Adrenal gland (tissue), 19 donors: ENCODE measurements at regions of chr12 and their contacts with region 1.

Region 1: DNA sequence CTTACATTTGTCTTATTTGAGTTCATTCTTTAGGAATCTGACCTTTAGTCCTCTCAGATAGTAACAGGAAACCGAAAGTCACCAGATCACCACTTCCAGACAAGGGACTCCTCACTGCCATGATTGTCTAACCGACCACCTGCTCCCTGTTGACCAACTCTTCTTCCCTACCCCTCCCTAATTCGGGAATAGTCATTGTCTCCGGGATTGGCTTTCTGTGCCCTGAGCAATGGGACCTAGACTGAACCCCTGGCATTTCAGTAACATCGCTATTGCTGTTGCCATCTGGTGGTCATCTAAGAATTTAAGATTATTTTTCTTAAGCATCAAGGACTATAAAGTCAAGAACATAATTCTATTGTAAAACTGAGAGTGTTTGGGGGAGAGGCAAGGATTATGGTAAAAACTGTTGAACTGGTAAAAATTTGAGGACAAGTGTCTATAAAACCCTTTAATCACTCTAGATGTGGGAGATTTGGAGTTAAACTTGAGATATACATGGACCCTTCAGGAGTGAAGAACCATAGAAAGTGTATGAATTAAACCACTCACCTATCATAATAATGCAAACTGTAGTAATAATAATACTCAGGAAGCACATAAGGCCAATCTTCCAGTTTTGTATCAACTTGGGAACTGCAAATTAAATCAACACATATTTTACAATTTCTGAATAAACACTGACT is 6.3 kb downstream of the CLEC2A start:
- DNase-seq: peak in 5 of 7 donors; percentile 11 to 26 (median 17)
- H3K4me3 ChIP-seq: peak overlapping the region in 1 of 4 donors; percentile 40
- H3K27ac ChIP-seq: no peak overlapping the region
- H3K4me1 ChIP-seq: peaks cover 0 to 5% of the 10 kb centered on the region in 2 donors
- H3K27me3 ChIP-seq: no peaks in the 10 kb centered on the region
- CTCF ChIP-seq: peak; percentile 28 to 69 (median 56)
- POLR2A ChIP-seq: no peak

Region 2: DNA sequence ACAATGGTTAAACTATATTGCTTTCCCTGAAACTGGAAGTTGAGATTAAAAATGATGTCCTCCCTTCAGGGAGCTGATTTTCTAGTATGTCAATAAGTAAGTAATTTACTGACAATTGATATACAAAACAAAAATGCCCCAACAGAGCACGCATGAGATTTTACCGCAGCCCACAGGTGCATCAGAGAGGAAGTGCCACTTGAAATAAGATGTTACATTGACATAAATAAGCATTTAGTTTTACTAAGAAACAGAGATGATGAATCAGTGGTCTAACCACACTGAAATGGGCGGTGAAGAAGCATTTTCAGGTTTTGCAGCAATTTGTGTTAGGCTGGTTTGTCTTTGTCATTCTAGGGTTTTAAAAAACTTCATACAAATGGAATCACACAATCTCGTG is 184.1 kb before region 1 on chr12:
- intact Hi-C with region 1: loop called in 1 of 2 experiments (anchors 5 kb)
- DNase-seq: no peak
- H3K4me3 ChIP-seq: no peak overlapping the region
- H3K27ac ChIP-seq: no peak overlapping the region
- H3K4me1 ChIP-seq: no peaks in the 10 kb centered on the region
- H3K27me3 ChIP-seq: peaks cover 4% of the 10 kb centered on the region
- CTCF ChIP-seq: no peak
- POLR2A ChIP-seq: no peak

Region 3: DNA sequence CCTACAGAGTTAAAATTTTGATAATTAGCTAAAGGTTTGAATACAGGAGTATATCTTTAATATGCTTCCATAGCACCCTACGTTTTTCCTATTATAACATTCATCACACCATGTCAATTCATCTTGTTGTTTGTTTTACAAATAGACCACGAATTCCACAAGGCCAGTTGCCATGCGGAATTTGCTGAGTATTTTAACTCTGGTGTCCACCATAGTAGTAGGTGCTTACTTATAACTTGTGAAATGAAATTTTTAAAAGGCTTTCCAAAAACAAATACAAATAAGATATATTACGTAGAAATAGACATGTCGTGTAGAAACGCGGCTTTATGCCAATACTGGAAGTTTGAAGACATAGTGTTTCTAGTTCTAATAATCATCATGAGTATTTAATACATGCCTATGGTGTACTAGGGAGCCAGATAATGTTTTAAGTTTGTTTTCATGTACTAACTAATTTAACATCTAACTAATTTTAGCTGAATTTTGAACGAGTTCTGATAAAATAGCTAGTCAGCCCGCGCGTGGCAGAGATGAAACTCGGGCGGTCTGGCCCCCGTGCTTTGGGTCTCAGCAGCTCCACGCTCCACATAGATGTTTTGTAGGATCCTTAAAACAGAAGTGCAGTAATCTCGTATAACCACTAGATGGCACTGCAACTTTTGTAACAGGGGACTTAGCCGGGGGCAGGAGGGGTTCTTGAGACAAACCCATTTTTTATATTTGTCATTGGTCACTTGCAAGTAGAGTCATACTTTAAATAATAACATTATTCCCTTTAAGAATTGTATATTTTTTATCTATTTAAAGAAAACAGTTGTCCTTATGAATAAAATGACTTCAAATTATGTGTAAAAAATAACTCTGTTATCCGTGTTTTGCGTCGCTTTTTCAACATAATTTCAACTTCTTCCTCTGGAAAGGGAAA is 175.3 kb before region 1 on chr12:
- intact Hi-C with region 1: loop called (anchors 5 kb)
- DNase-seq: peak in 6 of 7 donors; percentile 21 to 37 (median 27)
- H3K4me3 ChIP-seq: peak overlapping the region in 1 of 4 donors; percentile 50
- H3K27ac ChIP-seq: no peak overlapping the region
- H3K4me1 ChIP-seq: no peaks in the 10 kb centered on the region
- H3K27me3 ChIP-seq: no peaks in the 10 kb centered on the region
- CTCF ChIP-seq: peak; percentile 54 to 88 (median 66)
- POLR2A ChIP-seq: no peak

Region 4: GRCh38 chr12:9813821-9814809 is 111.7 kb before region 1 on chr12:
- intact Hi-C with region 1: loop called (anchors 5 to 10 kb)
- DNase-seq: peak; percentile 61 to 85 (median 69)
- H3K4me3 ChIP-seq: peak overlapping the region in 1 of 4 donors; percentile 5
- H3K27ac ChIP-seq: no peak overlapping the region
- H3K4me1 ChIP-seq: no peaks in the 10 kb centered on the region
- H3K27me3 ChIP-seq: no peaks in the 10 kb centered on the region
- CTCF ChIP-seq: peak; percentile 44 to 83 (median 70)
- POLR2A ChIP-seq: no peak